Heart left ventricle (tissue), 16 donors: ENCODE measurements at regions of chr4 and their contacts with region 1.

Region 1: GRCh38 chr4:69689599-69689998 is 36.6 kb upstream of the UGT2A1 start:
- DNase-seq: no peak
- ATAC-seq: no peak
- H3K4me3 ChIP-seq: no peak overlapping the region
- H3K27ac ChIP-seq: no peak overlapping the region
- H3K4me1 ChIP-seq: no peaks in the 10 kb centered on the region
- H3K27me3 ChIP-seq: no peaks in the 10 kb centered on the region
- CTCF ChIP-seq: peak in 11 of 12 donors; percentile 23 to 62 (median 48)
- POLR2A ChIP-seq: no peak

Region 2: GRCh38 chr4:69881173-69881773 is 191.7 kb after region 1 on chr4:
- intact Hi-C with region 1: loop called in 6 of 10 experiments (anchors 5 to 10 kb)
- DNase-seq: no peak
- ATAC-seq: peak; percentile 46 to 68 (median 59)
- H3K4me3 ChIP-seq: no peak overlapping the region
- H3K27ac ChIP-seq: no peak overlapping the region
- H3K4me1 ChIP-seq: no peaks in the 10 kb centered on the region
- H3K27me3 ChIP-seq: no peaks in the 10 kb centered on the region
- CTCF ChIP-seq: peak; percentile 25 to 70 (median 48)
- POLR2A ChIP-seq: no peak

Region 3: GRCh38 chr4:70505151-70505748 is 815.7 kb after region 1 on chr4:
- intact Hi-C with region 1: loop called in 4 of 10 experiments (anchors 5 to 10 kb)
- DNase-seq: peak in 3 of 5 donors; percentile 16 to 60 (median 25)
- ATAC-seq: no peak
- H3K4me3 ChIP-seq: no peak overlapping the region
- H3K27ac ChIP-seq: no peak overlapping the region
- H3K4me1 ChIP-seq: no peaks in the 10 kb centered on the region
- H3K27me3 ChIP-seq: peaks cover 0 to 2% (median 0%) of the 10 kb centered on the region in 9 donors
- CTCF ChIP-seq: peak; percentile 49 to 86 (median 70)
- POLR2A ChIP-seq: no peak